OCI-LY7 (cell line): ENCODE measurements at regions of chr1 and their contacts with region 1.

Region 1: DNA sequence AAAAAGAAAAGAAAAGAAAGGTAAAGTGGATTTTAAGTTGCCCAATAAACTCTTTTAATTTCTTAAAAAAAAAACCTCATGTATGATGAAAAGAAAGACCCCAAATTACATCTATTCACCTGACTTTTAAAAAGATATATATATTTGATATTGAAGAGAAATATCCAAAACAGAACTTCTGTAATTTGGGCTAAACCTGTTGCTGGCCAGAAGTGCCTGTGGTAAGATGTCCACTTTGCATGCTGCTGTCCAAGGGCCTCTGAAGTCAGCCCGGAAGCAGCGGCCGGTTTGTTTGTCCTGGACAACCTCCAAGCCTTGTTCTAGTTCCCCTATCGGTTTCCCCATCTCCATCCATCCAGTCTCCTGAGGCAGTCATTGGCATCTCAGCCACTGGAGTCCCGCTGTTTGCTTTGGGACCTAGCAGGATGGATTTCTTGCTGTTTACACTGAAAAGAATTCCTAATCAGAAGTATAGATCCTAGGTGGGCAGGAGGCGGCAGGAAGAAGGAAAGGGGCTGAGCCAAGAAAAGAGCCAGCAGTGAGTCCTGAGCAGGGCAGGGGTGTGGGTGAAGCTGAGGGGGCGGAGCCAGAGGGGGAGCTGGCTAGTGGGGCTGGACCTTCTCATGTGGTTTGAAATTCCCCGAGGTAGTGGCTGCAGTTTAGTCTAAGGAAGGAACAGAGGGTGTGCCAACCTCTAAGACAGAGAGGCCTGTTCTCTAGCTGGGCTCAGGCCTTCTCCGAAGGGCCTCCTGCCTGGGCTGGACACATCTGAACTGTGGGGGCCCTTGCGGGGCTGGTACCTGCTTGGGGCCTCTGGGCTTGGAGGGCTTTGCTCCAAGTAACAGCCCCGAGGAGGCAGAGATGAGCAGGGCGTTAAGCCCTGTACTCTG is 3.3 kb downstream of the NCMAP start:
- DNase-seq: no peak
- H3K4me3 ChIP-seq: no peak overlapping the region
- H3K27ac ChIP-seq: no peak overlapping the region
- H3K4me1 ChIP-seq: peaks cover 48% of the 10 kb centered on the region
- CTCF ChIP-seq: no peak

Region 2: GRCh38 chr1:24547195-24547594 is 12.0 kb before region 1 on chr1:
- CTCF ChIA-PET with region 1: interaction called, 8 read pairs
- POLR2A ChIA-PET with region 1: interaction called, 11 read pairs
- intact Hi-C with region 1: no loop called
- DNase-seq: no peak
- H3K4me3 ChIP-seq: peak overlapping the region; percentile 5
- H3K27ac ChIP-seq: peak overlapping the region; percentile 58
- H3K4me1 ChIP-seq: peaks cover 69% of the 10 kb centered on the region
- CTCF ChIP-seq: no peak